ENCODE measurements at regions of chr5 and their contacts with region 1.

Region 1: DNA sequence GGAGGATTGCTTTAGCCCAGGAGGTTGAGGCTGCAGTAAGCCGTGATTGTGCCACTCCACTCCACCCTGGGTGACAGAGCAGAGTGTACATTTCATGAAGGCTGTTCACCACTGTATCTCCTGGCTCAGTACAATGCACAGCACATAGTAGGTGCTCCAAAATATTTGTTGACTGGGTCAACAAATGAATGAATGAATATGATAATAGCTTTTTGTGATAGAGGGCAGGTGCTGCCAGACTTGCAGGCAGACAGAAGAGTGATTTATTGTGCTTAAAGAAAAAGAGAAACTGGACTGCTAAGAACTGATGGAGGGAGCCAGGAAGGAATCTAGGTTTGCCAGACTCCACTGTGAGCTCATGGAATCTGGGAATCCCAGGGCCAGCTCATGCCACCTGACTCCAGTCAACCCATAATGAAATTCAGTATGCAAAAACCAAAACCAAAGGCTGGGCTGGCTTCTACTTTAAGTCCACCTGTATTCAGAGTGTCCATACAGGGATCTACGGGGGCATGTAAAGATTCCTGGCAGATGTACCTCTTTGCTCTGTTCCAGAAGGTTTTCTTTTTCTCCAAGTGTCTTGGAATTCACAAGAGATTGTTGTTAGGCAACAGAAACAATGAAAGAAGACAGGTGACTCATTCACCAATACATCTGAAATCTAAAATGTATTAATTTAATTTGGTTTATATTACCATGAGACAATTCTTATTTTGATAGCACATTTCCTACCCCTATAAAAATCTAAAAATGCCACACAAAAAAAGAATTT is 15.5 kb upstream of the CTNNA1 start:
- DNase-seq: no peak

Region 2: GRCh38 chr5:138778234-138778633 is 40.6 kb after region 1 on chr5:
- intact Hi-C with region 1: loop called in 1 of 2 experiments (anchors 1 kb)
- DNase-seq: no peak

Measured in posterior vena cava (tissue), 2 donors.